Naive thymus-derived CD4-positive, alpha-beta T cell (primary cell): ENCODE measurements at regions of chr21 and their contacts with region 1.

Region 1: DNA sequence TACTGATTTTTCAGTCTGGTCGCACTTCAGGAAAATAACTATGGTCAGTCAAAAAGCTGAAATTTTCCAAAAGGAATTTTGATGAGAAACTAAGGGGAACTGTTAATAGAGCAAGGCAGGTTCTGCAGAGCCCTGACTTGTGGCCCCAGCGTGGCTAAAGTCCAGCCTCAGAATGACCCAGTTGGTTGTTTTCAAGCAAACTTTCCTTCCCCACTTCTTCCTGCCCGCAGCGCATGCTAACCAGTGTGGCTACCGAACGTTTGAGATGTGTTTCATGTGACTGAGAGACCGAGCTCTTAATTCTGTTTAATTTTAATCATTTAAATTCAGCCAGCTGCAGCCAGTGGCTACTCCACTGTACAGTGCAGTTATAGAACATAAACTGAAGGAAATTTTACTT is 6.2 kb upstream of the IL10RB start:
- DNase-seq: no peak
- ATAC-seq: peak; percentile 38
- H3K4me3 ChIP-seq: no peak overlapping the region
- H3K4me3 Mint-ChIP-seq: peak overlapping the region in 4 of 10 donors; percentile 2 to 52 (median 32)
- H3K27ac ChIP-seq: peak overlapping the region; percentile 51
- H3K27ac Mint-ChIP-seq: peak overlapping the region in 8 of 9 donors; percentile 10 to 89 (median 79)
- H3K4me1 ChIP-seq: peaks cover 14 to 21% of the 10 kb centered on the region in 2 donors
- H3K4me1 Mint-ChIP-seq: peaks cover 10 to 84% (median 46%) of the 10 kb centered on the region in 7 donors
- H3K27me3 ChIP-seq: no peaks in the 10 kb centered on the region
- H3K27me3 Mint-ChIP-seq: no peaks in the 10 kb centered on the region

Region 2: DNA sequence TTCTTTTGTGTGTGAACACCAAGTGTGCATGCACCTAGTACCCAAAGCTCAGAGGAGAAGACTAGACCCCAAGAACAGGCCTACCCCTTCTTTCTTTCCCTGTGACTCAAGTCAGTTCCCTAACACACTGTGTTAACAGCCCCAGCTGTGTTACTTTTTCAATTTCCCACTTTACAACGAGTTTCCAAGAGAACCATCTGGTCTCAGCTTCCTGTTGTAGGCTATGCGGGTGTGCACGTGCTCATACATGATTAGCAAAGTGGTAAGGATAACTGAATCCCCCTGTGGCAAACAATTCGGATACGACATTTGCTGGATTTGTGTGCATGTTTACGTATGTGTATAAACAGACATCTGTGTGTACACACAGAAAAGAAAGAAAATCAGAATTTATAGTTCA is 12.4 kb before region 1 on chr21:
- CTCF ChIA-PET with region 1: interaction called, 5 read pairs
- POLR2A ChIA-PET with region 1: interaction called, 4 read pairs
- intact Hi-C with region 1: loop called in 1 of 2 experiments (anchors 1 kb)
- DNase-seq: no peak
- ATAC-seq: no peak
- H3K4me3 ChIP-seq: no peak overlapping the region
- H3K4me3 Mint-ChIP-seq: peak overlapping the region in 8 of 10 donors; percentile 12 to 65 (median 48)
- H3K27ac ChIP-seq: peak overlapping the region; percentile 52
- H3K27ac Mint-ChIP-seq: peak overlapping the region; percentile 47 to 94 (median 89)
- H3K4me1 ChIP-seq: peaks cover 17 to 60% of the 10 kb centered on the region in 2 donors
- H3K4me1 Mint-ChIP-seq: peaks cover 47 to 82% (median 77%) of the 10 kb centered on the region in 7 donors
- H3K27me3 ChIP-seq: no peaks in the 10 kb centered on the region
- H3K27me3 Mint-ChIP-seq: no peaks in the 10 kb centered on the region